SK-N-SH (cell line): ENCODE measurements at regions of chr1 and their contacts with region 1.

Region 1: GRCh38 chr1:63674238-63674864 is 81.1 kb downstream of the PGM1 start:
- DNase-seq: peak; percentile 72
- H3K4me3 ChIP-seq: peak overlapping the region in 1 of 2 experiments; percentile 6; a peak in 1 of 4 replicates
- H3K27ac ChIP-seq: peak overlapping the region in 1 of 2 experiments; percentile 76; a peak in 2 of 4 replicates
- H3K4me1 ChIP-seq: peaks cover 0 to 17% of the 10 kb centered on the region in 2 experiments; a peak in 2 of 4 replicates
- H3K27me3 ChIP-seq: no peaks in the 10 kb centered on the region
- CTCF ChIP-seq: peak; percentile 77
- EP300 ChIP-seq: no peak
- RAD21 ChIP-seq: peak; percentile 89

Region 2: DNA sequence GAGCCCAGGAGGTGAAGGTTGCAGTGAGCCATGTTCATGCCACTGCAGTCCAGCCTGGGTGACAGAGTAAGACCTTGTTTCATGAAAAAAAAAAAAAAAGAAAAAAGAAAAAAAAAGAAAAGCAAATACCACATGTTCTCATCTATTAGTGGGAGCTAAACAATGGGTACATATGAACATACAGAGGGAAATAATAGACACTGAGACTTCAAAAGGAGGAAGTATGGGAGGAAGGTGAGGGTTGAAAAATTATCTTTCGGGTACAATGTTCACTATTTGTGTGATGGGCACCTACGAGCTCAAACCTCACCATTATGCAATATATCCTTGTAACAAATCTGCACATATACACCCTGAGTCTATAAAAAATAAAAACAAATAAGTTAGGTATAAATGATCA is 157.7 kb before region 1 on chr1:
- CTCF ChIA-PET with region 1: no interaction called
- POLR2A ChIA-PET with region 1: no interaction called
- DNase-seq: no peak
- H3K4me3 ChIP-seq: no peak overlapping the region
- H3K27ac ChIP-seq: no peak overlapping the region
- H3K4me1 ChIP-seq: peaks cover 0 to 2% of the 10 kb centered on the region in 2 experiments; a peak in 1 of 4 replicates
- H3K27me3 ChIP-seq: no peaks in the 10 kb centered on the region
- CTCF ChIP-seq: no peak
- EP300 ChIP-seq: no peak
- RAD21 ChIP-seq: no peak

Region 3: DNA sequence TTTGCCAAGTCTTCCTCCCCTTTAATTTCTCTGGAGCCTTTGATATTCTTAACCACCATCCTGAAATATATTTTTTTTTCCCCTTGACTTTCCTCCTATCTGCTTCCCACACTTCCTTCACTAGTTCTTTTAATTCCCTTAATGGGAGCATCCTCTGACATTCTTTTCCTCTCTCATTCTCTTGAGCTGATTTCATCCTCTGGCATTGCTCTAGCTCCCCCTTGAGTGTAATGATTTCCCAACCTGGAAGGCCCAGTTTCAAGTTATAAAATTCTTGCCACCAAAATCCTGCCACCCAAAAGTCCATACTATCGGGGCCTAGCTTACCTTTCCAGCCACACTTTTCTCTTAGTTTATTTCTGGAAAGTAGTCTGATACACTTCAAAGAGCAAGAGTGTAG is 489.6 kb after region 1 on chr1:
- CTCF ChIA-PET with region 1: interaction called, 11 read pairs
- POLR2A ChIA-PET with region 1: no interaction called
- DNase-seq: peak; percentile 24
- H3K4me3 ChIP-seq: no peak overlapping the region
- H3K27ac ChIP-seq: peak overlapping the region in 1 of 2 experiments; percentile 62; a peak in 2 of 4 replicates
- H3K4me1 ChIP-seq: peaks cover 0 to 11% of the 10 kb centered on the region in 2 experiments; a peak in 2 of 4 replicates
- H3K27me3 ChIP-seq: no peaks in the 10 kb centered on the region
- CTCF ChIP-seq: peak; percentile 69
- EP300 ChIP-seq: no peak
- RAD21 ChIP-seq: peak; percentile 74

Region 4: DNA sequence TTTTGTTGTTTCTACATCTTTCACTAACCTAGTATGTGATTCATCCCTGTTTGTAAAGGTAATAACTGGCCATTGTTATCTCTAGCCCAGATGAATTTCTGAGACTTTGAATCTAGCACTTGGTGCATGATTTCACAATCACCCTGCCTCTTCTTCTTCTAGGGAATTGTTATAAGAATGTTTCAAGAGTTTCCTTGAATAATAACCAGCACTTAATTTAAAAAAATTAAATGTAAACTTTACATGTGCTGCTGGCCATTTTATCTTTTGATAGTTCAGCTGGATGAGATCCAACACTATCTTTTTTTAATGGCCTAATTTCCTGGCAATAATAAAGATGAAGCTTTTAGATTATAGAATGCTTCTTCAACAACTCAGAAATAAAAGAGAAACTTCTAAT is 560.8 kb after region 1 on chr1:
- CTCF ChIA-PET with region 1: interaction called, 13 read pairs
- POLR2A ChIA-PET with region 1: no interaction called
- DNase-seq: no peak
- H3K4me3 ChIP-seq: no peak overlapping the region
- H3K27ac ChIP-seq: peak overlapping the region in 1 of 2 experiments; percentile 71; a peak in 2 of 4 replicates
- H3K4me1 ChIP-seq: peaks cover 0 to 6% of the 10 kb centered on the region in 2 experiments; a peak in 1 of 4 replicates
- H3K27me3 ChIP-seq: no peaks in the 10 kb centered on the region
- CTCF ChIP-seq: no peak
- EP300 ChIP-seq: no peak; a peak in 1 of 4 replicates
- RAD21 ChIP-seq: no peak

Region 5: DNA sequence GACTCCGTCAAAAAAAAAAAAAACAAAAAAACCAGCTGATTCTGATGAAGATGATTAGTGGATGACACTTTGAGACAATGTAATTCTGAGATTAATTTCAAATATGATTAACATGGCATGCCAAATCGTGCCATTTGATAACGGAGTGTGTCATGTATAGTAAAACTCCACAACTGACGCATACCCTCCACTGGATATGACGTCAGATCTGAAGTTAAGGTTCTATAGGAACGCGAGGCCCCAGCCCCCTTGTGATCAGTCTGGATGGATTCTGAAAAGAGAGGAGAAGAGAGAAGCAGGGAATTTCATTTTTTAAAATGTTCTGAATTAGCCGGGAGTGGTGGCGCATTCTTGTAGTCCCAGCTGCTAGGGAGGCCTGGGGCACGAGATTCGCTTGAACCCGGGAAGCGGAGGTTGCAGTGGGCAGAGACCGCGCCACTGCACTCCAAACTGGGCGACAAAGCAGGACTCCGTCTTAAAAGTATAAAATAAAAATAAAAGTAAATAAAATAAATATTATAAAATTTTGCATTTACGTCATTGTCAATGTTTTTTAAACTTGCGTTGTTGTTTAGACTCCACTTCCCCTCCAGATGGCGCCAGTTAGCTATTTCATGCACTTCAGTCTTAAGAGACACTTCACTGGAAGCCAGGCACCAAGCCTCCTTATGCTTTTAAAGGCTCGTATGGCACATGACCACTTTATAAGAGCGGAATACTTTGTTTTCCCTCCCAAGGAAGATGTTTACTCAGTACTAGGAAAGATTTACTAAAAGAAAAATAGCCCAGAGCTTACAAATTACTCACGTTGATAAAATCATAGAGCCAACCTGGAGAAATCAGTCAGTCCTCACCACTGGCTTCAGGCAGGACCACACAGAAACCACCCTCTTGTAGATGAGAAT is 594.6 kb after region 1 on chr1:
- CTCF ChIA-PET with region 1: no interaction called
- POLR2A ChIA-PET with region 1: no interaction called
- DNase-seq: peak; percentile 57
- H3K4me3 ChIP-seq: no peak overlapping the region
- H3K27ac ChIP-seq: peak overlapping the region in 1 of 2 experiments; percentile 8; a peak in 1 of 4 replicates
- H3K4me1 ChIP-seq: peaks cover 9% of the 10 kb centered on the region in 2 experiments; a peak in 2 of 4 replicates
- H3K27me3 ChIP-seq: no peaks in the 10 kb centered on the region; the same call in 1 of the 2 replicates
- CTCF ChIP-seq: peak; percentile 71
- EP300 ChIP-seq: no peak
- RAD21 ChIP-seq: peak; percentile 97